SK-N-SH (cell line): ENCODE measurements at regions of chr22 and their contacts with region 1.

Region 1: DNA sequence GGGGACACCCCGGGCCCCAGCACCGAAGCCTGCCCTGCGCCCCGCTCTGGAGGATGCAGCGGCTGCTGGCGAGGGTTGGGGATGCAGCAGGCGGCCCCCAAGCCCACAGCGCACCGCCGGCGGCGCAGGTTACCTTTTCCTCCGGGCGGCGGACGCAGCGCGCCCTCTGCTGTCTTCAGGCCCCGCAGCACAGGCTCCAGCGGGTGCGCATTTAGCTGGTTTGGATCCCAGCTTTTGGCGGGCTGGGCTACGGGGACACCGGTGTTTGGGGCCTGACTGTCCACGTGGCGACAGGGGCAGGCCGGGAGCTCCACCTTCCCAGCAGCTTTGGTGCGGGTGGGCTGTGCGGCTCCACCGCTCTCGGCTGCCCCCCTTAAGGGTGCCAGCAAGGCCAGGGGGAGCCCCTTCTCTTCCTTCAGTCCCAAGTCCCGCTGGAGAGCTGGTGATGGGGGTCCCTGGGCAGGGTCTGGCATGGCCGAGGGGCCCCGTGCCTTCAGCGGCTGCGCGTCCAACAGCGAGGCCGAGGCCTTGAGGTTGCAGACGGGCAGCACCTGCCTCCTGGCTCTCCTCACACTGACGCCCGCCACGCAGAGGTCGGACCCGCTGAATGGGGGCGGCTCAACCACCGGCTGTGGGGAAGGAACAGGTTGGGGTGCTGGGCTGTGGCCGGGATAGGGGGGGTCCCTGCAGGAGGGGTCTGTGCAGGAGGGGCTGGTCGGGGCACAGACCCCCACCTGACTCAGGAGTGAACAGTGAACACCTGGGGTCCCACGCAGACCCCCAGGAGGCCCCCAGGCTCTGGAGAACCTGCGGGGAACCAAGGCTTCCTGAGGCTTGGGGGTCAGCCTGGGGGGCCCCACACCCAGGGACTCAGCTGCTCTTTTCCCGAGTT is 18.0 kb upstream of the IL17REL start:
- DNase-seq: peak; percentile 92
- H3K4me3 ChIP-seq: peak overlapping the region in 1 of 2 experiments; percentile 19; a peak in 1 of 4 replicates
- H3K27ac ChIP-seq: no peak overlapping the region
- H3K4me1 ChIP-seq: peaks cover 0 to 13% of the 10 kb centered on the region in 2 experiments; a peak in 1 of 4 replicates
- H3K27me3 ChIP-seq: no peaks in the 10 kb centered on the region; the same call in 1 of the 2 replicates
- CTCF ChIP-seq: peak; percentile 75
- EP300 ChIP-seq: no peak
- RAD21 ChIP-seq: peak; percentile 80

Region 2: DNA sequence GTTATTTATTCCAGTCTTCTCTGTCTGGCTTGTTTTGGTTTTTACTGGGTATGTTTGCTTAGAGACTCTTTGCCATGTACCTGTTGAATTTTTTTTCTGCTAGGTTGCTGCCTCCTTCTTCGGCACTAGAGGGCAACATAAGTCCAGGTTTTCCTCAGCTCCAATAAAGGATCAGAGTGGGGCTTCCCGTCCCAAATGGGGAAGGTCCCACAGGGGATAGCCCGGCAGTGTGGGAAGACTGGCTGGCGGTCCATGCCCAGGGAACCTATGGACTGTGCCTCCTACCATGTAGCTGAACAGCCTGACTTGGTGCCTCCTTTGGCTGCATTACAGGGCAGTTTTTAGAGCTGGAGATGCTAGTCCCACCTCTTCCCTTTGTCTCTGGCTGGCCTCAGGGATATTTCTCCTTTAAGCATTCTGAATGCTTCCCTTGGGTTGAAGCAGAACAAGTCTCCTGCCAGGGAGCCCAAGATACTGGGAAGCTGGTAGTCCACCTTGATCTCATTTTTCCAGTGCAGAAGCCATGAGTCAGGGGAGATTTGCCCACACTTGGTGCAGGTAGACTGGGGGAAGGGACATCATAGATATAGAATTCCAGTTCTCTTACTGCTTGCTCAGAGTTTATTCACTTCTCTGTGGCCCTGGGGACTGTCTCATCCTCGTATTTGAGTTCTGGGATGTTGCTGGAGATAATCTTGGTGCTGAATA is 263.0 kb before region 1 on chr22:
- CTCF ChIA-PET with region 1: interaction called, 10 read pairs
- POLR2A ChIA-PET with region 1: no interaction called
- DNase-seq: peak; percentile 72
- H3K4me3 ChIP-seq: peak overlapping the region in 1 of 2 experiments; percentile 34; a peak in 1 of 4 replicates
- H3K27ac ChIP-seq: no peak overlapping the region
- H3K4me1 ChIP-seq: peaks cover 0 to 8% of the 10 kb centered on the region in 2 experiments; a peak in 1 of 4 replicates
- H3K27me3 ChIP-seq: no peaks in the 10 kb centered on the region
- CTCF ChIP-seq: peak; percentile 62
- EP300 ChIP-seq: no peak
- RAD21 ChIP-seq: peak; percentile 74

Region 3: GRCh38 chr22:49930739-49931412 is 99.7 kb before region 1 on chr22:
- CTCF ChIA-PET with region 1: interaction called, 88 read pairs
- POLR2A ChIA-PET with region 1: interaction called, 3 read pairs
- DNase-seq: peak; percentile 74
- H3K4me3 ChIP-seq: no peak overlapping the region
- H3K27ac ChIP-seq: no peak overlapping the region
- H3K4me1 ChIP-seq: peaks cover 0 to 30% of the 10 kb centered on the region in 2 experiments; a peak in 1 of 4 replicates
- H3K27me3 ChIP-seq: no peaks in the 10 kb centered on the region
- CTCF ChIP-seq: peak; percentile 45
- EP300 ChIP-seq: no peak
- RAD21 ChIP-seq: peak; percentile 77

Region 4: GRCh38 chr22:49992921-49993648 is 37.5 kb before region 1 on chr22:
- CTCF ChIA-PET with region 1: interaction called, 12 read pairs
- POLR2A ChIA-PET with region 1: no interaction called
- DNase-seq: peak; percentile 85
- H3K4me3 ChIP-seq: no peak overlapping the region
- H3K27ac ChIP-seq: no peak overlapping the region
- H3K4me1 ChIP-seq: no peaks in the 10 kb centered on the region
- H3K27me3 ChIP-seq: no peaks in the 10 kb centered on the region
- CTCF ChIP-seq: peak; percentile 57
- EP300 ChIP-seq: no peak
- RAD21 ChIP-seq: peak; percentile 73

Region 5: GRCh38 chr22:50040717-50041116 is 10.2 kb after region 1 on chr22:
- CTCF ChIA-PET with region 1: interaction called, 20 read pairs
- POLR2A ChIA-PET with region 1: no interaction called
- DNase-seq: no peak
- H3K4me3 ChIP-seq: no peak overlapping the region
- H3K27ac ChIP-seq: no peak overlapping the region
- H3K4me1 ChIP-seq: no peaks in the 10 kb centered on the region
- H3K27me3 ChIP-seq: peaks cover 12% of the 10 kb centered on the region
- CTCF ChIP-seq: no peak
- EP300 ChIP-seq: no peak
- RAD21 ChIP-seq: no peak

Region 6: DNA sequence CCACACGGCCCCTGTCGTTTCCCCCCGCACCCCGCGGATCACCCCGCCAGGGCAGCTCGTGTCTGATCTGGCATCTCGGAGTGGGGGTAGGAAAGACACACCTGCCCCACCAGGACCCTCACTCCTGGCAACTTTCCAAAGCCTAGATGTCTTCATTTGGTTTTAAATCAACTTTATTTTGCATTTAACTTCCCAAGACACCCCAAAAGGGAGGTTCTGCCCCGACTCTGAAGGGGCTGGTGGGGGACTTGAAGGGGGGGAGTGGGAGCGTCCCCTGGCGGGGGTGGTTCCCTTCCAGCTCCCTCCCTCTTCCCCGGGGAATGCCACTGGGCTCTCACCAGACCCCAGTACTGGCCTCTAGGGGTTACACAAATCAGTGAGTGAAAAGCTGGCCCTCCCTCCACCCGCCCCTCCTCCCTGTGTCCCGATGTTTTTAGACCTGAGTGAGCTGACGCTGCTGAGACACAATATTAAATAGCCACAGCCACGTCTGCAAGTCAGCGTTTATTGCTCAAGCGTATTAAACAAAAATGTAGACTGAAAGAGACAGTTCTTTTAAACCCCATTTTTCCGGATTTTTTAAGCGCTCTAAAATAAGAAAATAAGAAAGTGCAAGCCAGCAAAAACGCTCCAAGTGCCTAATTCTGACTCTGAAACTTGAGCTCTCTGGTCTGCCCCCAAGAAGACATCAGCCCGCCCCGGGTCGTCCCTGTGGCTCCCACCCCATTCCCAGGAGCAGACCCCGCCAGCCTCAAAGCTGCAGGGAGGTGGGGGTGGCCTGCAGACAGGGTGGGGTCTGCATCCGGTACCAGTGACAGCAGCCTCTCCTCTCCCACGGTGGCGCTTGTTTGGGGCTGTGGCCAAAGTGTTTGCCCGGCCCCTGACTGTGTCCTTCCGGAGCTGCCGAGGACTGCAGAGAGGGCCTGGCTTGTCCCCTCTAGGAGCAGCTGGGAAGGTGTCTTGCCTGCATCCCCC is 28.6 kb after region 1 on chr22:
- CTCF ChIA-PET with region 1: interaction called, 15 read pairs
- POLR2A ChIA-PET with region 1: no interaction called
- DNase-seq: peak; percentile 86
- H3K4me3 ChIP-seq: no peak overlapping the region
- H3K27ac ChIP-seq: no peak overlapping the region
- H3K4me1 ChIP-seq: no peaks in the 10 kb centered on the region; a peak in 1 of 4 replicates
- H3K27me3 ChIP-seq: peaks cover 15% of the 10 kb centered on the region
- CTCF ChIP-seq: no peak
- EP300 ChIP-seq: no peak
- RAD21 ChIP-seq: no peak